AG04449 (cell line): ENCODE measurements at regions of chr12 and their contacts with region 1.

Region 1: DNA sequence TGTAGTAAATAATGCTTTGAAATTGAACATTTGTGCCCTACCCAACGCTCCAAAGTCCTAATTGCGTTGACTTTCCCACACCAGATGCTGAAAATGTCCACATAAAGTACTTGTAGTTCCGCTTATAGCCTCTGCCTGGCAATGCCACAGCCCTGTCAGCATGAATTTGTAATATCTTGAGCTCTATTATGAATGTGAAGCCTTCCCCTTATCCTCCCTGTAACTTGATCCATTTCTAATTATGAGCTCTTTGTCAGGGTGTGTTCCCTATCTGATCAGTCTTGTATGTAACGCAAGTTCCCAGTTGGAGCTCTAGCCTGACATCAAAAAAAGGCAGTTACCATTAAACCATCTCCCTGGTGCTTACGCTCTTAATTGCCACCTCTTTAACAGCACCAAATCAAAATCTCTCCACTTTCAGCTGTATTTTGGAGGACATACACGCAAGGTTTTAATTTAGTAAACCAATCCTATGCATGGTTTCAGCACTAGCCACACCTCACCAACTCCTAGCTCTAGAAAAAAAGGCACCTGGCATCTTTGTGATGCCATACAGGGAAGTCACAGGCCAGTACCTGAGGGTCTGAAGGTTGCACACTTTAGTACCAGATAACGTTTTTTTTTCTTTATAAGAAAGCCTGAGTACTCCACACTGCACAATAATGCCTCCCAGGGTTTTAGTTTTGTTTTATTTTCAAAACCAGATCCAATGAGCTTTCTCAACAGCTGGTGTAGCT is 69.3 kb downstream of the EEA1 start:
- DNase-seq: no peak
- H3K4me3 ChIP-seq: no peak overlapping the region
- CTCF ChIP-seq: no peak

Region 2: GRCh38 chr12:92608151-92609091 is 251.4 kb before region 1 on chr12:
- CTCF ChIA-PET with region 1: no interaction called
- POLR2A ChIA-PET with region 1: no interaction called
- DNase-seq: no peak
- H3K4me3 ChIP-seq: no peak overlapping the region
- CTCF ChIP-seq: peak; percentile 51

Region 3: DNA sequence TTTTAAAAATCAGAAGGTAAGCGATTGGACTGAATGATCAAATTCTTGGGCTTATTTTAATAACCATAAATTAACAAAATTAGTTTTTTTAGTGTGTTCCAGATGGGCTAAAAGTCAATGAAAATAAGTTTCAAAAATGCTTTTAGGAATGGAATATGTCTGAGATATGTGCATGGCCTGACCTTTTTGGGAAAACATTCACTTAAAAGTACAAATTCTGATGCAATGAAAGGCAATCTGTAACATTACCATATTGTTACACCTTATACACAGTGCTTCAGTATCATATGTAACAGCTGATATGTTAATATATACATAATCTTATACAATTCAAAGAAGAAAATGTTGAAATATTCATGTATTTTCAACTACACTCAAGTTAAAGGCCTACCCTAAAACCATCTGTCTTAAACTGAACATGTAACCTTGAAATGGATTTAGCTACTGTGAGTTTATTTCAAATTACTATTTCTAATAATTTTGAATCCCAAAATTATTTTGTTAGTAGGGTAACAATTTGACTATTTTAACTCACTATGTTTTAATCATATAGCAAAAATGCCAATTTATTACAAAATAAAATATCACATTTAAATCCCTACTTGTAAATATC is 15.6 kb before region 1 on chr12:
- CTCF ChIA-PET with region 1: interaction called, 12 read pairs
- POLR2A ChIA-PET with region 1: no interaction called
- DNase-seq: no peak
- H3K4me3 ChIP-seq: no peak overlapping the region
- CTCF ChIP-seq: no peak